ENCODE measurements at regions of chr13 and their contacts with region 1.

Region 1: GRCh38 chr13:48580185-48580803 is 47.4 kb upstream of the RCBTB2 start:
- DNase-seq: peak; percentile 39
- H3K4me3 Mint-ChIP-seq: no peak overlapping the region
- H3K27ac Mint-ChIP-seq: no peak overlapping the region
- H3K4me1 Mint-ChIP-seq: peaks cover 33% of the 10 kb centered on the region
- H3K27me3 Mint-ChIP-seq: peaks cover 61% of the 10 kb centered on the region

Region 2: DNA sequence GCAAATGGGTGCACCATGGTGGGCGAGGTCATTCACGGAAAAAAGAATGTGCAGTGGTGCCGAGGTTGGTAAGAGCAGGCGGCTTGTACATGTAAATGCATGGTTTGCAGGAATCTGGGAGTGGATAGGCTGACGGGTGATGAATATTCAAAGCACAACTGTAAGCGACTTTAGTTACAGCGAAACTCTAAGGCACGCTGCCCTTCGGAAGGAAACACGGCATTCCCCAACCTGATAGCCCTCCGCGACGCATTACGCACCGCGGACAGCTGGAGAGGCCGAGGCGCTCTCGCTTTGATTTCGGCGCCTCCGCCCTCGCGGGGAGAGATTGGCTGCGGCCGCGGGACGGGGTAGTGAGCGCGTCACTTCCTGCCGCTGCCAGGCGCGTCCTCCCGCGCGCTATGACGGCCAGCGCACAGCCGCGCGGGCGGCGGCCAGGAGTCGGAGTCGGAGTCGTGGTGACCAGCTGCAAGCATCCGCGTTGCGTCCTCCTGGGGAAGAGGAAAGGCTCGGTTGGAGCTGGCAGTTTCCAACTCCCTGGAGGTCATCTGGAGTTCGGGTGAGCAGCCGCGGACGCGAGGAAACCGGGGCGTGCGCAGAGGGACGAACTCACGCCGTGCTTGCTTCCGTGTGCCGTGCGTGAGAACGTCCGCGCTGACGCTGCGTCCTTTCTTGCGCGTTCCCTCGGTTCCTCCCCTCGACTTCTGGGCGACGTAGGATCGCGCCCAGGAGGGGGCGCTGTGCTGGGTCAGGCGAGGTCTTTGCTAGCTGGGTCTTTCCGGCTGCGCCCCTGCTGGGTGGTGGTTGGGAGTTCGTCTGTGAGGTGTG is 542.7 kb before region 1 on chr13 and contains the start of gene NUDT15:
- intact Hi-C with region 1: loop called (anchors 5 kb)
- DNase-seq: peak; percentile 96
- H3K4me3 Mint-ChIP-seq: peak within 1 kb of the TSS; percentile 98
- H3K27ac Mint-ChIP-seq: peak within 1 kb of the TSS; percentile 99
- H3K4me1 Mint-ChIP-seq: peaks cover 40% of the 10 kb centered on the region
- H3K27me3 Mint-ChIP-seq: no peaks in the 10 kb centered on the region
- total RNA-seq, gene NUDT15: 12.2 and 15.9 TPM in 2 replicates

Region 3: DNA sequence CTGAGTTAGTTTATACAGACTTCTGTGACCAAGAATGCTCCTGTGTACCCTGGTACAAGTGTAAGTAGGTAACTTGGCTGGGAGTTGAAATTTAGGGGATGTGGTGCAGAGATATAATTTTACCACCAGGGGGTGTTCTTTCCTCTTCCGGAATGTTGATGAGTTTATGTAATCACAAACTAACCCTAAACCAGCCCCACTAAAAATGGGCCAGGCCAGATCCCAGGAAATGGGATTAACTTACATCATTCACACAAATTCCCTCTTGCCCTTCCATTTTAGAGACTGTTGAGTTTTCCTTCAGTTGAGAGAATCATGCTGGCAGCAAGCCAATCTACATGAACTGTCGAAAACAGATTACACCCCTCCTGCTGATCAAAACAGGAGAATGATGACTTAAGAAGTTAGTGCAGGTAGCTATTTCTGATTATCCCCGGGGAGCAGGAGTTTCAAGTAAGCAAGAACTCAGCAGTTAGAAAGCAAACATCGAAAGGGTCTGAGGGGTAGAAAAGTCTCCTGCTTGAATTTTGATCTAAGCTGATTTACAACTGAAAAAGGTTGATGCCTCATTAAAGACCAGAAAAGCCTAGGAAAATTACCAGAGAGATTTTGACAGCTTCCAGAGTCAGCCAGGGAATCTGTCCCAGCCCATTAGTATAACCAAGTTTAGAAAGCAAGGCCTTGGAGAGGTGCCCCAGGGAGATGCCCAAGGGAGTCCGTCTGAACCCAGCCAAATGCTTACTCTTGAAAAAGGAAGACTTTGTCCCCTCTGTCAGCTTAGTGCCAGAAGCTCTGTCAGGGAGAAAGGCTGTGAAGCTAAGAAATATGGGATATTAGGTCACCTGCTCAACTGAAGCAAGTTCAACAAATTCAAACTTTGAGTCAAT is 453.1 kb before region 1 on chr13:
- intact Hi-C with region 1: loop called (anchors 5 kb)
- DNase-seq: peak; percentile 14
- H3K4me3 Mint-ChIP-seq: no peak overlapping the region
- H3K27ac Mint-ChIP-seq: no peak overlapping the region
- H3K4me1 Mint-ChIP-seq: peaks cover 9% of the 10 kb centered on the region
- H3K27me3 Mint-ChIP-seq: peaks cover 10% of the 10 kb centered on the region

Region 4: GRCh38 chr13:48222358-48223301 is 357.7 kb before region 1 on chr13:
- intact Hi-C with region 1: loop called (anchors 5 kb)
- DNase-seq: no peak
- H3K4me3 Mint-ChIP-seq: no peak overlapping the region
- H3K27ac Mint-ChIP-seq: no peak overlapping the region
- H3K4me1 Mint-ChIP-seq: peaks cover 35% of the 10 kb centered on the region
- H3K27me3 Mint-ChIP-seq: peaks cover 45% of the 10 kb centered on the region

Region 5: GRCh38 chr13:48334534-48335127 is 245.7 kb before region 1 on chr13:
- intact Hi-C with region 1: loop called (anchors 1 kb)
- DNase-seq: no peak
- H3K4me3 Mint-ChIP-seq: no peak overlapping the region
- H3K27ac Mint-ChIP-seq: no peak overlapping the region
- H3K4me1 Mint-ChIP-seq: peaks cover 20% of the 10 kb centered on the region
- H3K27me3 Mint-ChIP-seq: peaks cover 2% of the 10 kb centered on the region

Region 6: DNA sequence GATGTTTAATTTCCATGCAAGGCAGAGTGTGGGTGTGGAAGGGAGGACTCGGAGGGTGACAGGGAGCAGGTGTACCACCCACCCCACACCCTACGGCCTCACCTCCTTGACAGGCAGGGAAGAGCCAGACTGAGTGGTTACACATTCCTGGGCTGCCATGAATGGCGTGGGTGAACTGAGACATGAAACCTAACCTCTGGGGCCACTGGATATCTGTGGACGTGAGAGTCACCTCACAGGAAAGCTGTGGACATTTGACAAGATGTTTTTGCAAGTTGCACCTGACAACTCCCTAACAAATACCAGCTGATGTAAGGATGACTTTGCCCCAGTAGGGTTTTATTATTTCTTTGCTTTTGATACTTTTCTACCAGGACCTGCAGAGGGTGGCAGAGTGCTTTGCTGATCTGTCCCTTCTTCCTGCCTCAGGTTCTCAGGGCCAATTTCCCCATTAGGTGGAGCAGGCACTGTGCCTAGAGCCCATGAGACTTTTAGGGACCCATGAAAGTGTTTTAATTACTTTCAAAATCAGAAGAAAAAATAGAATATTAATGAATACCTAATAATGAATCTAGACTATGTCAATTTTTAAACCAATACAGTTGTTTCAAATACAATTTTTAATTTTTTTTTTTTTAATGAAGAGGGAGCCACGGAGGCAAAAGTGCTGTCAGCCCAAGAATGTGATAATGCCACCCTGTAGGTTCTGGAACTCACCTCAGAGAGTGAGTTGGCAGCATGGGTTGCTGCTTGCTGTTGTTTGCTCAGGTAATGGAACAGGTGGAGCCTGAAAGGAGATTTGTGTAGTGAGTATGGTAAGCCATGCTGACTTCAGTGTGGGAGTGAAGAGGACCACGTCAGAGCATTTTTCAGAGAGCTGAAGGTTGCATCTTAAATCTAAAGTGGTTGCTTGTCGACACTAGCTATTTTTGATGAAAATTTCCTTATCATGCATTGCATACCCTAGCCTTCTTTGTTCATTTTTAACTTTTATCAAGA is 15.4 kb after region 1 on chr13:
- intact Hi-C with region 1: no loop called
- DNase-seq: peak; percentile 32
- H3K4me3 Mint-ChIP-seq: no peak overlapping the region
- H3K27ac Mint-ChIP-seq: no peak overlapping the region
- H3K4me1 Mint-ChIP-seq: peaks cover 3% of the 10 kb centered on the region
- H3K27me3 Mint-ChIP-seq: peaks cover 5% of the 10 kb centered on the region

Region 7: GRCh38 chr13:48686811-48687210 is 106.5 kb after region 1 on chr13:
- intact Hi-C with region 1: no loop called
- DNase-seq: no peak
- H3K4me3 Mint-ChIP-seq: no peak overlapping the region
- H3K27ac Mint-ChIP-seq: no peak overlapping the region
- H3K4me1 Mint-ChIP-seq: no peaks in the 10 kb centered on the region
- H3K27me3 Mint-ChIP-seq: no peaks in the 10 kb centered on the region

Region 8: DNA sequence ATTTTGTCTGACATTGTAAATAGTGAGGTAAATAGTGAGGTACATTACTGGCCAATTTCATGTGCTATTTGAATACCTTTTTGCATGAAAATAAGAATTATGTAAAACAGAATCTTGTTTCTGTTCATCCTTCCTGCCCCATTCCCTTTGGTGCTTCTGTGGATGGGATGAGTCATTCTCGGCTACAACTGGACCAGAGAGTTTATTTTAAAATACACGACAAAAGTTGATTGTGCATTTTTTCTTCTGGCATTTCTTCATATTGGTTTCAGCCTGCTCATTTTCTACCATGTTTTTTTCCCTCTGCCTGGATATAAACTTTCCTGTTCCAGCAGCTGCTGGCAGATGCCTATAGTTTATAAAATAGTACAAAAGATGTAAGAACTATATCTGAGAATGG is 181.0 kb after region 1 on chr13:
- intact Hi-C with region 1: no loop called
- DNase-seq: no peak
- H3K4me3 Mint-ChIP-seq: no peak overlapping the region
- H3K27ac Mint-ChIP-seq: no peak overlapping the region
- H3K4me1 Mint-ChIP-seq: no peaks in the 10 kb centered on the region
- H3K27me3 Mint-ChIP-seq: peaks cover 25% of the 10 kb centered on the region

Measured in activated T-helper 2 cell treated with anti-CD3 and anti-CD28 coated beads, Interferon-gamma antibody, Interleukin-2, Interleukin-4, amounts not matched to agents 10 μg/mL and 5 μg/mL and 100 μg/mL, durations not matched to agents 14 hours and 24 hours and 36 hours (primary cell).